CD4-positive, alpha-beta memory T cell (primary cell): ENCODE measurements at regions of chr20 and their contacts with region 1.

Region 1: GRCh38 chr20:63009045-63009961 is 2.5 kb upstream of the BHLHE23 start:
- DNase-seq: peak; percentile 74 to 82 (median 74)
- H3K4me3 ChIP-seq: peak overlapping the region in 1 of 2 donors; percentile 65
- H3K4me3 Mint-ChIP-seq: peak overlapping the region in 6 of 8 donors; percentile 86 to 92 (median 90)
- H3K27ac ChIP-seq: no peak overlapping the region
- H3K27ac Mint-ChIP-seq: peak overlapping the region in 5 of 7 donors; percentile 36 to 95 (median 80)
- H3K4me1 ChIP-seq: peaks cover 44% of the 10 kb centered on the region
- H3K4me1 Mint-ChIP-seq: peaks cover 7 to 43% (median 26%) of the 10 kb centered on the region in 4 donors
- H3K27me3 ChIP-seq: peaks cover 31% of the 10 kb centered on the region
- H3K27me3 Mint-ChIP-seq: peaks cover 40% of the 10 kb centered on the region in 2 donors

Region 2: GRCh38 chr20:62668441-62669027 is 340.8 kb before region 1 on chr20:
- CTCF ChIA-PET with region 1: no interaction called
- POLR2A ChIA-PET with region 1: no interaction called
- intact Hi-C with region 1: loop called (anchors 10 kb)
- DNase-seq: peak in 4 of 5 donors; percentile 21 to 40 (median 38)
- H3K4me3 ChIP-seq: no peak overlapping the region
- H3K4me3 Mint-ChIP-seq: no peak overlapping the region
- H3K27ac ChIP-seq: no peak overlapping the region
- H3K27ac Mint-ChIP-seq: no peak overlapping the region
- H3K4me1 ChIP-seq: no peaks in the 10 kb centered on the region
- H3K4me1 Mint-ChIP-seq: peaks cover 0 to 3% (median 0%) of the 10 kb centered on the region in 4 donors
- H3K27me3 ChIP-seq: no peaks in the 10 kb centered on the region
- H3K27me3 Mint-ChIP-seq: no peaks in the 10 kb centered on the region

Region 3: GRCh38 chr20:62874745-62875344 is 134.5 kb before region 1 on chr20:
- CTCF ChIA-PET with region 1: interaction called, 16 read pairs
- POLR2A ChIA-PET with region 1: no interaction called
- intact Hi-C with region 1: loop called (anchors 1 kb)
- DNase-seq: no peak
- H3K4me3 ChIP-seq: no peak overlapping the region
- H3K4me3 Mint-ChIP-seq: peak overlapping the region in 1 of 8 donors; percentile 44
- H3K27ac ChIP-seq: no peak overlapping the region
- H3K27ac Mint-ChIP-seq: peak overlapping the region in 1 of 7 donors; percentile 75
- H3K4me1 ChIP-seq: peaks cover 5% of the 10 kb centered on the region
- H3K4me1 Mint-ChIP-seq: peaks cover 9 to 27% (median 17%) of the 10 kb centered on the region in 4 donors
- H3K27me3 ChIP-seq: no peaks in the 10 kb centered on the region
- H3K27me3 Mint-ChIP-seq: peaks cover 0 to 3% of the 10 kb centered on the region in 2 donors

Region 4: DNA sequence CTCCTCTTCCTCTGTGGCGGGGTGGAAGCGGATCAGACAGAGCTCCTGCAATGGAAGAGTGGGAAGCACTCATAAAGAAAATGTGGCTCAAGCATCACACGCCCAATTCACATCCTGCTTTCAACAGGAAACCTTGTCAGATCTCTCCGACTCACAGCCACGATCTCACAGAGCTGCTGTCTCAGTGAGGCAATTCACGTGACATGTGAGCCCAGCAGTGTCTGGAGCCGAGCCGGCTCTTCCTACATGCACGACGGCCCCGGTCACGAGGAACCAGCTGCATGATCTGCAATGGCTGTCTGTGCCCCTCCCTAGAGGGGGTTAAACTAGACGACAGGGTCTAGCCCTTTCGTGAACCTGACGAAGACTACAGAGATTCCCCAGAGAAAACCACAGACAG is 118.2 kb before region 1 on chr20:
- CTCF ChIA-PET with region 1: interaction called, 10 read pairs
- POLR2A ChIA-PET with region 1: no interaction called
- intact Hi-C with region 1: no loop called
- DNase-seq: peak; percentile 31 to 56 (median 43)
- H3K4me3 ChIP-seq: no peak overlapping the region
- H3K4me3 Mint-ChIP-seq: peak overlapping the region in 4 of 8 donors; percentile 13 to 62 (median 40)
- H3K27ac ChIP-seq: peak overlapping the region; percentile 13
- H3K27ac Mint-ChIP-seq: peak overlapping the region; percentile 79 to 93 (median 84)
- H3K4me1 ChIP-seq: peaks cover 26% of the 10 kb centered on the region
- H3K4me1 Mint-ChIP-seq: peaks cover 10 to 34% (median 13%) of the 10 kb centered on the region in 4 donors
- H3K27me3 ChIP-seq: no peaks in the 10 kb centered on the region
- H3K27me3 Mint-ChIP-seq: no peaks in the 10 kb centered on the region

Region 5: GRCh38 chr20:62953839-62954703 is 55.2 kb before region 1 on chr20:
- CTCF ChIA-PET with region 1: interaction called, 5 read pairs
- POLR2A ChIA-PET with region 1: interaction called, 4 read pairs
- intact Hi-C with region 1: loop called (anchors 10 kb)
- DNase-seq: peak; percentile 74 to 85 (median 77)
- H3K4me3 ChIP-seq: peak overlapping the region; percentile 17 to 27
- H3K4me3 Mint-ChIP-seq: peak overlapping the region; percentile 72 to 93 (median 83)
- H3K27ac ChIP-seq: peak overlapping the region; percentile 57
- H3K27ac Mint-ChIP-seq: peak overlapping the region; percentile 92 to 95 (median 93)
- H3K4me1 ChIP-seq: peaks cover 28% of the 10 kb centered on the region
- H3K4me1 Mint-ChIP-seq: peaks cover 11 to 31% (median 24%) of the 10 kb centered on the region in 4 donors
- H3K27me3 ChIP-seq: no peaks in the 10 kb centered on the region
- H3K27me3 Mint-ChIP-seq: no peaks in the 10 kb centered on the region

Region 6: GRCh38 chr20:62972270-62973032 is 36.9 kb before region 1 on chr20:
- CTCF ChIA-PET with region 1: interaction called, 13 read pairs
- POLR2A ChIA-PET with region 1: interaction called, 16 read pairs
- intact Hi-C with region 1: loop called (anchors 1 kb)
- DNase-seq: peak; percentile 78 to 83 (median 80)
- H3K4me3 ChIP-seq: no peak overlapping the region
- H3K4me3 Mint-ChIP-seq: peak overlapping the region; percentile 64 to 92 (median 75)
- H3K27ac ChIP-seq: no peak overlapping the region
- H3K27ac Mint-ChIP-seq: peak overlapping the region in 3 of 7 donors; percentile 17 to 86 (median 23)
- H3K4me1 ChIP-seq: peaks cover 12% of the 10 kb centered on the region
- H3K4me1 Mint-ChIP-seq: peaks cover 11 to 29% (median 15%) of the 10 kb centered on the region in 4 donors
- H3K27me3 ChIP-seq: peaks cover 6% of the 10 kb centered on the region
- H3K27me3 Mint-ChIP-seq: peaks cover 27 to 28% of the 10 kb centered on the region in 2 donors

Region 7: GRCh38 chr20:62980970-62981369 is 28.3 kb before region 1 on chr20:
- CTCF ChIA-PET with region 1: interaction called, 12 read pairs
- POLR2A ChIA-PET with region 1: interaction called, 6 read pairs
- intact Hi-C with region 1: no loop called
- DNase-seq: peak; percentile 30 to 77 (median 37)
- H3K4me3 ChIP-seq: no peak overlapping the region
- H3K4me3 Mint-ChIP-seq: peak overlapping the region in 5 of 8 donors; percentile 42 to 75 (median 66)
- H3K27ac ChIP-seq: no peak overlapping the region
- H3K27ac Mint-ChIP-seq: peak overlapping the region in 3 of 7 donors; percentile 17 to 31 (median 17)
- H3K4me1 ChIP-seq: peaks cover 46% of the 10 kb centered on the region
- H3K4me1 Mint-ChIP-seq: peaks cover 14 to 60% (median 27%) of the 10 kb centered on the region in 4 donors
- H3K27me3 ChIP-seq: peaks cover 26% of the 10 kb centered on the region
- H3K27me3 Mint-ChIP-seq: peaks cover 30 to 36% of the 10 kb centered on the region in 2 donors

Region 8: DNA sequence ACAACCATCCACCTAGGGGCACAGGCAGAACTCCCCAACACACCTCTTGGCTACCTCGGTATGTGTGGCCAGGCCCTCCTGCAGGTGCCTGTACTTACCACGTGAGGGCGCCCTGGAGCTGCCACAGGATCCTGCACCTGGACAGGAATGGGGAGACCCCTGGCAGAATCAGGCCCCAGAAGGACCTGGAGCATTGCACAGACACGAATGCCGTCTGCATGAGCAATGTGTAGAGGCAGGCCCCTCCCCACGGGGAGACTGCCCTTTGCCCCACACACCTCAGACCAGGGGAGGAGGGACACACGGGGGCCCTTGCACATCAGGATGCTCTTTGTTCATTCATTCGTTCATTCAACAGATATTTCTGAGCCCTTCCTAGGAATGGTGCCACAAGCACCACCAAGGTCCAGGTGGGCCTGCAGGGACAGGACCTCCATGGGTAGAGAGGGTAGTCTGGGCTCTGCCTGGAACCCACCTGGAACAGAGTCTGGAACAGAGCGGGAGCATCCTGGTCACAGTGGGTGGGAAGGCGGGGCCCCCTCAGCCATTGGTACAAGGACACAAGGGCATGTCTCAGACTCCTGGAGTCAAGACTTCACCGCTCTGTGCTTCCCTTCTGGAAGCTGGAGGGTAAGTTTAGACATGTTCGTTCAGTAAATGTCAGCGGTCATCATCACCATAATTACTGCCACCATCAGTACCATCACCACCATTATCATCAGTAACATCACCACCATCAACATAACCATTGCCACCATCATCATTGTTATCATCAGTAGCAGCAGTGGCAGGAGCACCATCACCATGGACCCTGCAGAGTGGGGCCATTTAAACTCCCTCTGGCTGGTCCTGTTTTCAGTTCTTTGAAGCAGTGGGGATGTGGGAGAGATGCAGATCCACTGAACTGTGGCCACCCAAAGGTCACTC is 174.4 kb after region 1 on chr20:
- CTCF ChIA-PET with region 1: no interaction called
- POLR2A ChIA-PET with region 1: no interaction called
- intact Hi-C with region 1: no loop called
- DNase-seq: peak; percentile 35 to 53 (median 37)
- H3K4me3 ChIP-seq: no peak overlapping the region
- H3K4me3 Mint-ChIP-seq: no peak overlapping the region
- H3K27ac ChIP-seq: no peak overlapping the region
- H3K27ac Mint-ChIP-seq: no peak overlapping the region
- H3K4me1 ChIP-seq: peaks cover 11% of the 10 kb centered on the region
- H3K4me1 Mint-ChIP-seq: peaks cover 0 to 5% (median 4%) of the 10 kb centered on the region in 4 donors
- H3K27me3 ChIP-seq: peaks cover 17% of the 10 kb centered on the region
- H3K27me3 Mint-ChIP-seq: peaks cover 14 to 21% of the 10 kb centered on the region in 2 donors